ENCODE measurements at regions of chr2 and their contacts with region 1.

Region 1: DNA sequence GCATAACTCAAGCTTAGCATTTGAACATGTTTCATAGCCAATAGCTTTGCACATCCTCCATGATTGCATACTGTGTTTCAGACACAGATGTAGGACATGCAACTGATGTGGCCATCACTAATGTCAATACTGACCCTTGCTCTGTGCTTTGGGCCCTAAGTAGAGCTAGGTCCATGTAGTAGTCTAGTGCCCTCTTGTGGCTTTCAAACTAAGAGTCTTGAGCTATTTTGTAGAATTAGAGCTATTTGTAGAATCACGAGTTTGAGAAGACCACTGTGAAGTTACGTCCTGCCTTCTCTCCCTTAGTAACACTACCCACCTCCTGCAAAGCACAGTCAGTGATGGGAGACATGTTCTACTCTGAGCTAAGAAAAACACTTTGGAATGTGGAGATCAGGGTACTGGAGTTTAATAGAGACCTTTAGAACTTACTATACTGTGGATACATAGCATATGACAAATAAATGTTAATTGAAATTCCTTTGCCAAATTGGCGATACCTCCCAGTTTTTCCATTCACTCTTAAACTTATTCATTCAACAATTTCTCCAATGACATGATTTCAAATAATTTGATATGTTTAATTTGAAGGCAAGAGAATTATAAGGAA is 306.5 kb upstream of the TNP1 start:
- DNase-seq: peak; percentile 8 to 57 (median 20)
- ATAC-seq: peak; percentile 90
- H3K4me3 ChIP-seq: no peak overlapping the region
- H3K27ac ChIP-seq: no peak overlapping the region
- H3K4me1 ChIP-seq: peaks cover 0 to 6% of the 10 kb centered on the region in 2 experiments; a peak in 2 of 5 replicates
- H3K27me3 ChIP-seq: no peaks in the 10 kb centered on the region
- CTCF ChIP-seq: peak; percentile 61 to 71 (median 64)
- EP300 ChIP-seq: no peak
- POLR2A ChIP-seq: no peak
- RAD21 ChIP-seq: peak; percentile 87 to 94

Region 2: GRCh38 chr2:216687646-216688045 is 478.7 kb before region 1 on chr2:
- CTCF ChIA-PET with region 1: no interaction called
- POLR2A ChIA-PET with region 1: no interaction called
- in situ Hi-C with region 1: loop called (anchors 5 kb)
- intact Hi-C with region 1: loop called (anchors 5 kb)
- DNase-seq: peak; percentile 41 to 56 (median 52)
- ATAC-seq: peak; percentile 81
- H3K4me3 ChIP-seq: no peak overlapping the region
- H3K27ac ChIP-seq: no peak overlapping the region
- H3K4me1 ChIP-seq: peaks cover 8 to 12% of the 10 kb centered on the region in 2 experiments; a peak in 4 of 5 replicates
- H3K27me3 ChIP-seq: no peaks in the 10 kb centered on the region; a peak in 1 of 5 replicates
- CTCF ChIP-seq: peak; percentile 46 to 65 (median 64)
- EP300 ChIP-seq: no peak
- POLR2A ChIP-seq: no peak
- RAD21 ChIP-seq: peak in 1 of 2 experiments; percentile 42; a peak in 2 of 4 replicates

Region 3: DNA sequence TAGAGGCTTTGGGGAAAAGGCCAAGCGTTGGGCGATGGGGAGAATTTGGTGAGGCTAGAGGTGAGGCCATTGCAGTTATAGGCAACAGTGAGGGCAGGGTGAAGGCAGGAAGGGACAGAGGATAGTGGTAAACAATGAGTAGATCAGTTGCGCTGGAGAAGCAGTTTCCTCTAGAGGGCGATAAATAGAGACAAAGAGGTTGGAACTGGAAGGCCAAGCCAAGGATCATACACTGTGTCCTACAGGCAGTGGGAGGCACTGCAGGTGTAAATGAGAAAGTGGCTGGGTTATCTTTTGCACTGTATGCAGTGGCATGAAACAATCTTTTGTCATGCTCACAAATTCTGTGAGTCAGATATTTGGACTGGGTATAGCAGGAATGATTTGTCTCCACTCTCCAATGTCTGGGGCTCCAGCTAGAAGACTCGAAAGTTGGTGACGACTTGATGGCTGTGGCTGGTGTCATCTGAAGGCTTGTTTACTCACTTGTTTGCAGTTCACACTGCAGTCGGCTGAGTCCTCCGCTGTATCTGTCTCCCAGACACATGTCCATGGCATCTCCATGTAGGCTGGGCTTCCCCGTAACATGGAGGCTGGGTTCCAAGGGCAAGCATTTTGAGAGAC is 388.6 kb before region 1 on chr2:
- CTCF ChIA-PET with region 1: no interaction called
- POLR2A ChIA-PET with region 1: no interaction called
- in situ Hi-C with region 1: no loop called
- intact Hi-C with region 1: loop called (anchors 5 kb)
- DNase-seq: peak; percentile 72 to 85 (median 76)
- ATAC-seq: peak; percentile 89
- H3K4me3 ChIP-seq: no peak overlapping the region
- H3K27ac ChIP-seq: no peak overlapping the region
- H3K4me1 ChIP-seq: peaks cover 15 to 33% of the 10 kb centered on the region in 2 experiments; a peak in 4 of 5 replicates
- H3K27me3 ChIP-seq: no peaks in the 10 kb centered on the region
- CTCF ChIP-seq: peak; percentile 92 to 99 (median 99)
- EP300 ChIP-seq: 0 out of 2 replicates have a peak, but pooled peaks have one; percentile 8
- POLR2A ChIP-seq: no peak
- RAD21 ChIP-seq: peak; percentile 84 to 90

Region 4: DNA sequence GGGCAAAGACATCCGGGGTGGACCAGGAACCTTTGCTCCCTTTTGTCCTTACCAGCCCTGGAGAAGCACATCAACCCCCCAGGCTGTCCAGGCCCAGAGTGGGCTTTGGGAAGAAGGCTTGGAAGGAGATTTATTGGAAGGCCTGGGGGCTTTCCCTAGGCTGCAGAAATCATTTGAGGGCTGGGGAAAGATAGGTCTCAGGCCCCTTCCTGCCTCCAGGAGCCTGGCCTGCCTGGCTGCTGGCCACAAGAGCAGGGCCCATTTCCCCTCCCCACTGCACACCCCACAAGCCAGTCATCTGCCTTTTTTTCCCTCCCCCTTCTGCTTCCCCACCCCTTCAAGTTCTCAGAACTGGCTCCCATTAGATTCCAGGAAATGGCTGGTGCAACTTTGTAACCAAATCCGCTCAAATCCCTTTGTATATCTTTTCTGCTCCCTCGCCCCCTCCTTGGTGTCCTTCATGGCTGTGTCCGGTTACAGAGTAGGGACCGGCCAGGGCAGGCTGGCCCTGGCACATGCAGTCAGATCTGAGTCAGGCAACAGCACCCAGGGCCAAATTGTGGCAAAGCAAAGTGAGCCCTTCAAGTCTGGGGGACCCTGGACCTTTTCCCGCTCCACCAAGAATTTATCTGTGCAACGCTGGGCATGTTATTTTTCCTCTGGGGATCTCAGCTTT is 285.7 kb before region 1 on chr2:
- CTCF ChIA-PET with region 1: no interaction called
- POLR2A ChIA-PET with region 1: no interaction called
- in situ Hi-C with region 1: no loop called
- intact Hi-C with region 1: loop called (anchors 10 kb)
- DNase-seq: peak; percentile 53 to 93 (median 72)
- ATAC-seq: peak; percentile 92
- H3K4me3 ChIP-seq: no peak overlapping the region
- H3K27ac ChIP-seq: peak overlapping the region; percentile 78
- H3K4me1 ChIP-seq: peaks cover 41 to 49% of the 10 kb centered on the region in 2 experiments
- H3K27me3 ChIP-seq: no peaks in the 10 kb centered on the region
- CTCF ChIP-seq: no peak
- EP300 ChIP-seq: peak; percentile 88
- POLR2A ChIP-seq: peak; percentile 54
- RAD21 ChIP-seq: no peak

Region 5: DNA sequence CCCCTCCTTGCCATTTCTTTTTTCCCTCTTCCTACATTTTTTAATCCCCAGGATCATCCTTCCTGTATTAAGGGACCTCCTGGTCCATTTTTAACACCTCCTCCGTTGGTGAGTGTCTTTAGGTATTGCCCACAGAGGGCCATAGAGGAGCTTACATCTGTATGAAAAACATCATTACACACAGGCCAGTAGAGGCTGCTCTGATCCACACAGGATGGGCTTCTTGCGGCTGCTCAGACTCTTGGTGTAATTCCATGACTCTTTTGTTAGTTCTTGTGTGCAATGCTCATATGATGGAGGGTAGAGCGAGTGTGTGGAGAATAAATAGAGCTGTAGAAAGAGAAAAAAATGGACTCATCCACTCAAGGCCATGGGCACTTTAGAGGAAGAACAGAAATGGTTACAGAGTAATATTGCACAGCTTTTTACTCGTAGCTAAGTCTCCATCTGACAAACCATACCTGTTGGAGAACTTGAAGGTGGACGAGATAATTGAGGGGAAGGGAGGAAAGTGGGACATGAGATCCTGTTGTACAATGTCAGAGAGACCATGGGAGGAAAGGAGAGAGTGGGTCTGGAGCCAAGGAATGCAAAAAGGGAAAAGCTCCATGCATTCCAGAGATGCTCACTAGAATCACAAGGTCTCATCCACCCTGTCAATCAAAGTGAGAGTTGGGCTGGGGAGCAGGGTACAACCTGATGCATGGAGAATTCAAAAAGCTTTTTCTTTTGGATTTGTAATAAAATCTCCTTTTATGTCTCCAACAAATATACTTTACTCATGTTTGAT is 176.8 kb before region 1 on chr2:
- CTCF ChIA-PET with region 1: no interaction called
- POLR2A ChIA-PET with region 1: interaction called, 3 read pairs
- in situ Hi-C with region 1: no loop called
- intact Hi-C with region 1: loop called (anchors 1 kb)
- DNase-seq: peak in 2 of 4 experiments; percentile 13 to 14
- ATAC-seq: peak; percentile 66
- H3K4me3 ChIP-seq: no peak overlapping the region
- H3K27ac ChIP-seq: no peak overlapping the region
- H3K4me1 ChIP-seq: peaks cover 0 to 8% of the 10 kb centered on the region in 2 experiments; a peak in 2 of 5 replicates
- H3K27me3 ChIP-seq: peaks cover 0 to 16% of the 10 kb centered on the region in 2 experiments; a peak in 3 of 5 replicates
- CTCF ChIP-seq: peak; percentile 26 to 57 (median 50); a peak in 5 of 6 replicates
- EP300 ChIP-seq: no peak
- POLR2A ChIP-seq: no peak
- RAD21 ChIP-seq: peak in 1 of 2 experiments; percentile 55; a peak in 2 of 4 replicates

Region 6: DNA sequence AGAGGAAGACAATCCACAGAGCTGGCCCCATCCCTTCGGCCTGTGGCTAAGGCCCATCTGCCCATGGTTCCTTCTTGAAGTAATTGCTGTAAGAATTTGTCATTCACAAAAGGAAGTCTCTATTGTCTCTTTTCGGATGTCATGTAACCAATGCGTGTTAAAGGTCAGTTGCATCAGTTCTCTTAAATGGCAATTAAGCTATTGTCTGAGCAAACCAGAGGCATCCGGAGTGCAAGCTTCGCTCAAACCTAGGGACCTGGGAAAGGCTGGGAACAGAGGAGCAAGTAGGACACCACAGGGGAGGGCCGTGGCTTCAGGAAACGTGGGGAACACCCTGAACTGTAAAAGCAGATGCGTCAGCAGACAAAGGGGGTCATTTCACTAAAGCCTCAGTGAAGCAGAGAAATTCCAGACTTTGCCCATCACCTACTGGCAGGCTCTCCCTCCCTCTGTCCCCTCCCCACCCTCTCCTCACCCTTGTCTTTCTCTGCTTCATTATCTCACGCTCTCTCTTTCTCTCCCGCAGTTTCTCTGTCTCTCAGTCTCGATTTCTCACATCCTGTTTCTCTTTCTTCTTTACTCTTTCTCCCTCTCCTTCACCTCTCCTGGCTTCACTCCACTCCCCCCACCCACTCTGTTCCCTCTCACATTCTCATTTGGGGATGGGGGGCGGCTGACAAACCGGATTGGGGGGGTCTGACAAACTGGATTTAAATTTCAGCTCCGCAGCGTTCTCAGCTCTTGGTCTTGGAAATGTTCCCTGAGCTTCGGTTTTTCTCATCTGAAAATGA is 101.9 kb before region 1 on chr2:
- CTCF ChIA-PET with region 1: no interaction called
- POLR2A ChIA-PET with region 1: no interaction called
- in situ Hi-C with region 1: no loop called
- intact Hi-C with region 1: loop called (anchors 5 kb)
- DNase-seq: no peak
- ATAC-seq: no peak
- H3K4me3 ChIP-seq: no peak overlapping the region
- H3K27ac ChIP-seq: no peak overlapping the region
- H3K4me1 ChIP-seq: peaks cover 0 to 19% of the 10 kb centered on the region in 2 experiments; a peak in 2 of 5 replicates
- H3K27me3 ChIP-seq: no peaks in the 10 kb centered on the region
- CTCF ChIP-seq: no peak
- EP300 ChIP-seq: no peak
- POLR2A ChIP-seq: no peak
- RAD21 ChIP-seq: no peak

Region 7: GRCh38 chr2:217261452-217261851 is 95.1 kb after region 1 on chr2:
- CTCF ChIA-PET with region 1: no interaction called
- POLR2A ChIA-PET with region 1: no interaction called
- in situ Hi-C with region 1: no loop called
- intact Hi-C with region 1: no loop called
- DNase-seq: peak in 1 of 4 experiments; percentile 8
- ATAC-seq: no peak
- H3K4me3 ChIP-seq: no peak overlapping the region
- H3K27ac ChIP-seq: no peak overlapping the region
- H3K4me1 ChIP-seq: no peaks in the 10 kb centered on the region
- H3K27me3 ChIP-seq: no peaks in the 10 kb centered on the region
- CTCF ChIP-seq: no peak
- EP300 ChIP-seq: no peak
- POLR2A ChIP-seq: no peak
- RAD21 ChIP-seq: no peak

Region 8: GRCh38 chr2:217510771-217511291 is 344.5 kb after region 1 on chr2:
- CTCF ChIA-PET with region 1: no interaction called
- POLR2A ChIA-PET with region 1: no interaction called
- in situ Hi-C with region 1: no loop called
- intact Hi-C with region 1: loop called (anchors 5 kb)
- DNase-seq: peak; percentile 39 to 63 (median 52)
- ATAC-seq: peak; percentile 85
- H3K4me3 ChIP-seq: no peak overlapping the region
- H3K27ac ChIP-seq: no peak overlapping the region
- H3K4me1 ChIP-seq: no peaks in the 10 kb centered on the region
- H3K27me3 ChIP-seq: no peaks in the 10 kb centered on the region
- CTCF ChIP-seq: peak; percentile 63 to 76 (median 64); a peak in 5 of 6 replicates
- EP300 ChIP-seq: no peak
- POLR2A ChIP-seq: no peak
- RAD21 ChIP-seq: peak; percentile 79 to 83